ENCODE measurements at regions of chr3 and their contacts with region 1.

Region 1: GRCh38 chr3:51371943-51372557 is 13.0 kb upstream of the MANF start:
- DNase-seq: peak in 1 of 2 experiments; percentile 68
- ATAC-seq: peak; percentile 75 to 88
- H3K4me3 ChIP-seq: no peak overlapping the region
- H3K27ac ChIP-seq: no peak overlapping the region
- H3K4me1 ChIP-seq: no peaks in the 10 kb centered on the region
- CTCF ChIP-seq: peak; percentile 66
- EP300 ChIP-seq: no peak
- POLR2A ChIP-seq: no peak
- RAD21 ChIP-seq: peak; percentile 82 to 90

Region 2: GRCh38 chr3:51099794-51100535 is 272.1 kb before region 1 on chr3:
- CTCF ChIA-PET with region 1: interaction called, 56 read pairs
- POLR2A ChIA-PET with region 1: no interaction called
- DNase-seq: peak; percentile 22 to 49
- ATAC-seq: peak; percentile 90 to 96
- H3K4me3 ChIP-seq: no peak overlapping the region
- H3K27ac ChIP-seq: no peak overlapping the region
- H3K4me1 ChIP-seq: no peaks in the 10 kb centered on the region
- CTCF ChIP-seq: peak; percentile 60
- EP300 ChIP-seq: no peak
- POLR2A ChIP-seq: no peak
- RAD21 ChIP-seq: peak; percentile 58 to 62; a peak in 4 of 5 replicates

Region 3: GRCh38 chr3:51358981-51359380 is 13.1 kb before region 1 on chr3:
- CTCF ChIA-PET with region 1: interaction called, 13 read pairs
- POLR2A ChIA-PET with region 1: no interaction called
- DNase-seq: no peak
- ATAC-seq: no peak
- H3K4me3 ChIP-seq: no peak overlapping the region
- H3K27ac ChIP-seq: no peak overlapping the region
- H3K4me1 ChIP-seq: no peaks in the 10 kb centered on the region
- CTCF ChIP-seq: no peak
- EP300 ChIP-seq: no peak
- POLR2A ChIP-seq: no peak
- RAD21 ChIP-seq: no peak

Region 4: GRCh38 chr3:51384726-51385473 is 12.8 kb after region 1 on chr3 and contains the start of gene MANF:
- CTCF ChIA-PET with region 1: interaction called, 28 read pairs
- POLR2A ChIA-PET with region 1: no interaction called
- DNase-seq: peak; percentile 95 to 98
- ATAC-seq: peak; percentile 92 to 97
- H3K4me3 ChIP-seq: peak within 1 kb of the TSS; percentile 95
- H3K27ac ChIP-seq: peak within 1 kb of the TSS; percentile 97 to 99
- H3K4me1 ChIP-seq: peaks cover 32% of the 10 kb centered on the region
- CTCF ChIP-seq: no peak
- EP300 ChIP-seq: no peak
- POLR2A ChIP-seq: peak; percentile 82
- RAD21 ChIP-seq: no peak
- polyA plus RNA-seq, gene MANF: 62.8 and 84.9 TPM in 2 replicates

Region 5: GRCh38 chr3:51941798-51942602 is 570.0 kb after region 1 on chr3 and contains the starts of genes PARP3 and RRP9:
- CTCF ChIA-PET with region 1: no interaction called
- POLR2A ChIA-PET with region 1: no interaction called
- DNase-seq: peak; percentile 97 to 99
- ATAC-seq: peak; percentile 90 to 95
- H3K4me3 ChIP-seq: peak within 1 kb of the TSS; percentile 92
- H3K27ac ChIP-seq: peak within 1 kb of the TSS; percentile 97 to 100
- H3K4me1 ChIP-seq: peaks cover 21% of the 10 kb centered on the region
- CTCF ChIP-seq: peak; percentile 89
- EP300 ChIP-seq: no peak
- POLR2A ChIP-seq: peak; percentile 76
- RAD21 ChIP-seq: peak; percentile 80 to 91
- polyA plus RNA-seq, gene PARP3: 7.6 and 7.8 TPM in 2 replicates
- polyA plus RNA-seq, gene RRP9: 17.0 TPM in 2 replicates

Measured in A549 (cell line).